ENCODE measurements at regions of chr17 and their contacts with region 1.

Region 1: DNA sequence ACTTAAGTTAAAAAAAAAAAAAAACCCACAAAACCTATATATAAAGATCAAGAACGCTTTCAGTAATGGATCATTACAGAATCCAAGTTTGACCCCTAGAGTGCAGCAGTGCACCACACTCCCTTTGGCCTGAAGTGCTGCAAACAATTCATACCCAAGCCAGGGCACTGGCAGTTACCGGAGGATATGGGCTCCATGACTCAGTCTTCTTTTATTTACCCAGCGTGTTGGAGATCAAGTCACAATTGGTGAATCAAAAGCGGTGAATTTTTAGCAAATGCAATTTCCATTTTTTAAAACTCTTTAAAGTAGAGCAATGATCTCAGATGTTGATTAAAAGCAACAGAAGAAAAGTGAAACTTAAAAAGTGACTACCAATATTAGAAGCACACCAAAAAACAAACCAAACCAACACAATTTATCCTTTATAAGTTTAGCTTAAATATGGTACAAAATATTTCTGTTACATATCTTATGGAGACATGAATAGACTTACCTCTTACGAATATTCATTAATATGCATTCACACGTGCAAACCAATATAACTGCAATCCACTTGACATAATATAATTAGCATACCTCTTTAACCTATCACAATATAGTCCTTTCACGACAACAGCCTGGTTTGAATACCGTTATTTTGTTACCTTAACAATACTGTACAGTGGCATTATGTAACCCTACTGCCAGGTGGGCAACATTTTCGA is 46.3 kb downstream of the ZNF652 start:
- DNase-seq: peak; percentile 89
- ATAC-seq: peak; percentile 100
- H3K4me3 Mint-ChIP-seq: no peak overlapping the region
- H3K27ac Mint-ChIP-seq: no peak overlapping the region
- H3K4me1 Mint-ChIP-seq: peaks cover 24% of the 10 kb centered on the region
- H3K27me3 Mint-ChIP-seq: no peaks in the 10 kb centered on the region

Region 2: DNA sequence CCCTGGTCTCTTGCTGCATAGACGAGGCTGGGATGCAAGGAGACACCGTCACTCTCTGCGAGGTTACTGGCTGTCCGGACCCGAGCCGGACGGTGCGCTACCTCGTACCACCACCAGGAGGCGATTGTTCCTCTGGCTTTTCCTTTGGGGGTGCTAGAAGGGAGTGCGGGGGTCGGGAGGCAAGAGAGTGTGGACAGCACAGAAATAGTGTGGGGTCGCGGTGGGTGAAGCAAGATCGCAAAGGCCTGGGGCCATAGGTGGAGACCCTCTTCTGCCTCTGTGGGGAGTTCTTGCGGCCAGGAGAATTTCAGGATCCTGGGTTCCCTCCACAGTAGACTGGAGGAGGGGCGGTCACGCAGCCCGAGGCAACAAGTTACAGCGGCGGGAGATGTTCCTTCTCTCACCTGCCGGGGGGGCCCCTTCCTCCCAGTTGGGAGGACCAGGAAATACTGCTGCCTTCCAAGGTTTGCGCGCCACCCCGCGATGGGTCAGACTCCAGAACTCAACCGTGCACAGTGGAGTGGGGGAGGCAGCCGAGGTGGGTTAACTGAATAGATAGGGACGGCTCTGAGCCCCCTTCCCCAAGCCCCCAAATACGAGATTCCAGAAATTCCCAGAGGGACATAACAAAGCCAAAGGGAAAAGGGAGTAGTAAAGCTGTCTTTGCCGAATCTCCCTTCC is 92.0 kb before region 1 on chr17:
- CTCF ChIA-PET with region 1: no interaction called
- POLR2A ChIA-PET with region 1: no interaction called
- intact Hi-C with region 1: no loop called
- DNase-seq: peak; percentile 82
- ATAC-seq: peak; percentile 45
- H3K4me3 Mint-ChIP-seq: peak overlapping the region; percentile 42
- H3K27ac Mint-ChIP-seq: peak overlapping the region; percentile 35
- H3K4me1 Mint-ChIP-seq: peaks cover 28% of the 10 kb centered on the region
- H3K27me3 Mint-ChIP-seq: peaks cover 14% of the 10 kb centered on the region

Region 3: GRCh38 chr17:49297141-49297540 is 18.6 kb before region 1 on chr17:
- CTCF ChIA-PET with region 1: interaction called, 12 read pairs
- POLR2A ChIA-PET with region 1: no interaction called
- intact Hi-C with region 1: no loop called
- DNase-seq: no peak
- ATAC-seq: no peak
- H3K4me3 Mint-ChIP-seq: no peak overlapping the region
- H3K27ac Mint-ChIP-seq: no peak overlapping the region
- H3K4me1 Mint-ChIP-seq: peaks cover 6% of the 10 kb centered on the region
- H3K27me3 Mint-ChIP-seq: no peaks in the 10 kb centered on the region

Region 4: DNA sequence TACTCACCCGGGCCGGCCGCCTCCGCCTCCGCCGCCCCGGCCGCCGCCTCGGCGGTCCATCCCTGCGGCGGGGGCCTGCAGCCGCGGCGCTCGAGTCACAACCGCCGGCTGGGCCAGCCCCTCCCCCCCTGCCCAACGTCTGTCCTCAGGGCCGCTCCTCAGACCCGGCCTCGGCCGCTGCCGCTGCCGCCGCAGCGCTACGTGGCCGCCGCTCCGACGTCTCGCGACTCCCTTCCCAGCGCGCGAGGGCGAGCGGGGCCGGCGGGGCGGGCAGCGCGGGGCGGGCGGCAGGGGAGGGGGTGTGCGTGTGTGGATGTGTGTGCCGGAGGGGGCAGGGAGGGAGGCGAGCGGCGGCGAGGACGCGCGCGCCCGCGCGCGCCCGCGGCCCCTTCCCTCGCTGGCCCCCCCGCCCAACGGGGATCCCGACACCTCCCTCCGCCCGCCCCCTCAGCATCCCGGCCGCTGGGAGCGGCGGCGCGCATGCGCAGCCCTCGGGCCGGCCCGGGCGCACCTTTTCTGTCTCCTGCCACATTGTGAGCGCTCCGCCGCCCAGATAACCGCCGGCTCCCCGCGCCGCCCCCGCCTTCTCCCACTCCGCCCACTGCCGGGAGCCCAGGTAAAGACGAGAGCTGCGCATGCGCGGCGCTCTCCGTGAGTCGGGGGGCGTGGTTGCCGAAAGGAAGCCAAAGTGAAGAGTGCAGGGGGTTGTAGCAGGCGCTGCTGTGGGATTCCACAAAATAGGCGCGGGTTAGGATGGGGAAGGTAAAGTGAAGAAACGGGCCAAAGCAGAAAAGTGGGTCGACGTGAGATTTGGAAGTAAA is 46.4 kb after region 1 on chr17 and contains the start of gene ZNF652:
- CTCF ChIA-PET with region 1: interaction called, 116 read pairs
- POLR2A ChIA-PET with region 1: interaction called, 3 read pairs
- intact Hi-C with region 1: loop called (anchors 1 to 2 kb)
- DNase-seq: peak; percentile 93
- ATAC-seq: peak; percentile 57
- H3K4me3 Mint-ChIP-seq: peak within 1 kb of the TSS; percentile 92
- H3K27ac Mint-ChIP-seq: peak within 1 kb of the TSS; percentile 92
- H3K4me1 Mint-ChIP-seq: peaks cover 50% of the 10 kb centered on the region
- H3K27me3 Mint-ChIP-seq: peaks cover 1% of the 10 kb centered on the region
- total RNA-seq, gene ZNF652: 5.2 to 7.0 TPM

Region 5: DNA sequence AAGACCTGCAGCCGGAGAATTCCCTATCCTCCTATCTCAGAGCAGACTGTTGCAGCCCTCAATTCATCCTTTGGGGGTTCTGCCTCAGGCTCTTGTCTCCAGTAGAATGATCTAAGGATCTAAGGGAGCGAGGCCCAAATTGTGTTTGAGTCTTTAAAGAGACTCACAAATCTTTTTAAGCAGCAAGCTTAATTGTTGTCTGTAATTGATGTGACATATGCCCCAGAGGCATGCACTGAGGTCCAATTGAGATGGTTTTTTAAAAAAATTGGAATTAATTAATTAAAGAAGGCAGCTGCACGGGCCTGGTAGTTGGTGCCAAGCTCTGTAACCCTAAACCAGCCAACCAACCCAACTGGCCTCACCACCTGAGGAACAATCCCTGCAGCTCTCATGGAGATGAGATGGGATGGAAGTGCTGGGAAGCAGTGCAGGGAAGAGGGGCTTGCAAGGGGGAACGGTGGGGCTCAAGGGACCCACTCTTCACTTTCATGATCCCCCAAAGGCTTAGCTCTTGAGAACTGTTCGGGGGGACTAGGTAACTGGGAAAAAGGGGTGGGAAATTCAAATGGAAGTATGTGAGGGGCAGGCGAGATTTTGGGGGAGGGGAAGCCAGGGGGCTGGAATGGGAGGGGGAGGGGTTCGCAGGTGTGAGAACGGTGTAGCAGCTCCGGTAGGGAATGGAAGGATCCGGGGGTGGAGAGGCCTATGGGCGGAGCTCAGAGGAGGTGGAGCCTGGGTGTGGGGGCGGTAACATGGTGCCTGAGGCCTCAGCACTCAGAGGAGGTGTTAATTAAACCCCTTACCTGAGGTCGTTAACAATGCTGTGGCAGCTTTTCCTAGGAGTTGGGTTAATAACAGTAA is 55.5 kb after region 1 on chr17:
- CTCF ChIA-PET with region 1: interaction called, 116 read pairs
- POLR2A ChIA-PET with region 1: no interaction called
- intact Hi-C with region 1: loop called (anchors 1 kb)
- DNase-seq: no peak
- ATAC-seq: no peak
- H3K4me3 Mint-ChIP-seq: no peak overlapping the region
- H3K27ac Mint-ChIP-seq: no peak overlapping the region
- H3K4me1 Mint-ChIP-seq: no peaks in the 10 kb centered on the region
- H3K27me3 Mint-ChIP-seq: no peaks in the 10 kb centered on the region

Region 6: GRCh38 chr17:49390548-49391324 is 75.0 kb after region 1 on chr17:
- CTCF ChIA-PET with region 1: interaction called, 72 read pairs
- POLR2A ChIA-PET with region 1: no interaction called
- intact Hi-C with region 1: loop called (anchors 1 kb)
- DNase-seq: no peak
- ATAC-seq: no peak
- H3K4me3 Mint-ChIP-seq: no peak overlapping the region
- H3K27ac Mint-ChIP-seq: peak overlapping the region; percentile 16
- H3K4me1 Mint-ChIP-seq: peaks cover 54% of the 10 kb centered on the region
- H3K27me3 Mint-ChIP-seq: no peaks in the 10 kb centered on the region

Region 7: DNA sequence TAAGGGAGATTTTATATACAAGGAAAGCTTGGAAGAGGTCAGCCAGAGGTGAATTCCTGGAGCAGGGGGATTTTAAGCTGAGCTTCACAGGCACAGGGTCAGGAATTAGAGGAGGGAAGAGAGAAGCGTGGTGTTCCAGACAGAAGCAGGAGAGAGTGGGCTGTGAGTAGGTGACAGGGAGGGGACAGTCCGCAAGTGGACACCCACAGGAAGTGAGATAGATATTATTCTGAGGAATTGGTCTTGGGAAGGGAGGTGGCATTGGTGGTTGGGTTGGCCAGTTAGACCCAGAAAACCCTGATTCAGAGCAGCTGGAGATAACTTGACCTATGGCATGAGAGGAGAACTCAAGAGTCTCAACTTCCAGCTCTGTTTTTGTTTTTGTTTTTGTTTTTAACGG is 84.3 kb after region 1 on chr17:
- CTCF ChIA-PET with region 1: interaction called, 72 read pairs
- POLR2A ChIA-PET with region 1: no interaction called
- intact Hi-C with region 1: loop called (anchors 1 kb)
- DNase-seq: no peak
- ATAC-seq: no peak
- H3K4me3 Mint-ChIP-seq: no peak overlapping the region
- H3K27ac Mint-ChIP-seq: no peak overlapping the region
- H3K4me1 Mint-ChIP-seq: peaks cover under 1% of the 10 kb centered on the region
- H3K27me3 Mint-ChIP-seq: no peaks in the 10 kb centered on the region